Activated CD4-positive, alpha-beta memory T cell treated with anti-CD3 and anti-CD28 coated beads for 36 hours (primary cell): ENCODE measurements at regions of chr1 and their contacts with region 1.

Region 1: DNA sequence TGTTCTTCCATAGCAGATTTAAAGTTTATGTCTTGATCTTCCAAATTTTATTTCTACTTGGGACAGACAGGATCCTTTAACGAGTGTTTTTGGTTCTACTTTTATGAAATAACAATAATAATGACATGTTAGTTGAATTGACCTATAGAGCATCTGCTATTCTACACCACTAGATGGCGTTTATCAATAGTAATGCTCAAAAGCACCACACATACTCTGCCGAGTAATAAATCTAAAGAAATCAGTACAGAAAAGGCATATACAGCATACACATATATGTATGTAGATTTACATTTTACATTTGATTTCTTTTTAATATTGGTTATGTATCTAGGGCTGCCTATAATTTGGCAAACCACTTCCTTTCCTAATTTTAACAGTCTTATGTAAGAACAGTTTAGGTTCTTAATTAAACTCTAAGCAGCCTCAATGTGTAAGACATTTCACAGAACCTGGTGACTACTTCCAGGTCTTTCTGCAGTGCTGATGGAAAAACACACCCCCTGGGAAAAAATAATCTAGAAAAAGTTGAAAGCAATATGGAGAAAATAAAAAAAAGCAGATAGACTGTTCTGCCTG is 5.9 kb upstream of the SIPA1L2 start:
- DNase-seq: no peak
- H3K4me3 Mint-ChIP-seq: no peak overlapping the region
- H3K27ac Mint-ChIP-seq: no peak overlapping the region
- H3K4me1 Mint-ChIP-seq: peaks cover 7% of the 10 kb centered on the region
- H3K27me3 Mint-ChIP-seq: peaks cover 7% of the 10 kb centered on the region

Region 2: DNA sequence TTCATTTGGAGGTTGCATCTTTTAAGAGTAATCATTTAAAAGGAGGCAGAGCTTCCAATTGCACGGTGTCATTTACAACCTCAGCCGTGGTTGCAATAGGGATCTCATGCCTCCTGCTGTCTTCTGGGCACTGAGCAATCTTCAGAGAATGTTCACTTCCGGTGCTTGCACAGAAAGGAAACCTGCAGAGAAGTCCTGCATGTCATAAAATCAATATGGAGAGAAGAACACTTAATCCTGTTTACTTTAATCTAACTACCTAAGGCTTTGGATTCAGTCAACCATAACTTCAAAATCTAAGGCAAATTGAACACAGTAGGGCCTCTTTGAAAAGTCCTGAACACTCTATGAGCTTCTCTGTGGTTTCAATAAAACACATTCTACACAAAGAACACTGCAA is 158.1 kb after region 1 on chr1:
- CTCF ChIA-PET with region 1: interaction called, 4 read pairs
- POLR2A ChIA-PET with region 1: no interaction called
- intact Hi-C with region 1: loop called (anchors 5 kb)
- DNase-seq: peak; percentile 37
- H3K4me3 Mint-ChIP-seq: no peak overlapping the region
- H3K27ac Mint-ChIP-seq: no peak overlapping the region
- H3K4me1 Mint-ChIP-seq: peaks cover 11% of the 10 kb centered on the region
- H3K27me3 Mint-ChIP-seq: no peaks in the 10 kb centered on the region

Region 3: DNA sequence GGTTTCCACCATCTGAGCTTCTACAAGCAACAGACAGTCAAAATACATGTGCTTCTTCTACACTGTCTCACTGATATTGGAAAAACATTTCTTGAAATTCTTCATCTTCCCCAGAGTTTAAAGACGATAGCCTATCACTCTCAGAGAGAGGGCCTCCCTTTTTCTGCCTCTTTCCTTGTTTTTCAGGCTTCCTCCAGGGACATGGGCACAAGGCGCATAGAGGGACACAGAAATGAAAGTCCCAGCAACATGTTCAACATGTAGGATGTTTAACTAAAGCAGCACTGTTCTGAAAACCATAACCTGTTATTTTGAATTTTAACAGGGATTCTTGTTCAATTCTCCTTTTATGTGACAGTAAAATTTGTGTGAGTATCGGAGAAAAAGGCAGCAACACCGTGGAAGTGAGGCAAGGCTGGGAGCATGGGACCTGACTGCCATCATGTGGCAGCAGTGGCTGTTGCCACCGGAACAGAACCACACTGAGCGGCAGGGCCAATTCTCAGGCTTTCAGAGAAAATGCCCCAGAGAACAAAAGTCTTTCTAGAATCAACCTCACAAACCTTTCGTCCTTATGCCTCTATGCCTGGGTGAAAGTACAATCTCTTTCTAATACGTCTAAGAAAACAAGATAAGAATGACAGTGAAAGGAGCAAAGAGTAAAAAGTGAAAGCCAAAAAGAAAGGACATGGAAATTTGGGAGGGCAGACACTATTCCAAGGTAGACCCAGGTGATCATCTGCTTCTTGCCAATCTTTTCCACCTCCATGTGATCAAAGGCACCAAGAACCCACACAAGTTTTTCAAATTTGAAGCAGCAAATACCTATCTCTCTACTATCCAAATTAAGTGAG is 605.2 kb after region 1 on chr1:
- CTCF ChIA-PET with region 1: no interaction called
- POLR2A ChIA-PET with region 1: no interaction called
- intact Hi-C with region 1: loop called (anchors 5 kb)
- DNase-seq: peak; percentile 12
- H3K4me3 Mint-ChIP-seq: no peak overlapping the region
- H3K27ac Mint-ChIP-seq: no peak overlapping the region
- H3K4me1 Mint-ChIP-seq: no peaks in the 10 kb centered on the region
- H3K27me3 Mint-ChIP-seq: no peaks in the 10 kb centered on the region